ENCODE measurements at regions of chr2 and their contacts with region 1.

Region 1: DNA sequence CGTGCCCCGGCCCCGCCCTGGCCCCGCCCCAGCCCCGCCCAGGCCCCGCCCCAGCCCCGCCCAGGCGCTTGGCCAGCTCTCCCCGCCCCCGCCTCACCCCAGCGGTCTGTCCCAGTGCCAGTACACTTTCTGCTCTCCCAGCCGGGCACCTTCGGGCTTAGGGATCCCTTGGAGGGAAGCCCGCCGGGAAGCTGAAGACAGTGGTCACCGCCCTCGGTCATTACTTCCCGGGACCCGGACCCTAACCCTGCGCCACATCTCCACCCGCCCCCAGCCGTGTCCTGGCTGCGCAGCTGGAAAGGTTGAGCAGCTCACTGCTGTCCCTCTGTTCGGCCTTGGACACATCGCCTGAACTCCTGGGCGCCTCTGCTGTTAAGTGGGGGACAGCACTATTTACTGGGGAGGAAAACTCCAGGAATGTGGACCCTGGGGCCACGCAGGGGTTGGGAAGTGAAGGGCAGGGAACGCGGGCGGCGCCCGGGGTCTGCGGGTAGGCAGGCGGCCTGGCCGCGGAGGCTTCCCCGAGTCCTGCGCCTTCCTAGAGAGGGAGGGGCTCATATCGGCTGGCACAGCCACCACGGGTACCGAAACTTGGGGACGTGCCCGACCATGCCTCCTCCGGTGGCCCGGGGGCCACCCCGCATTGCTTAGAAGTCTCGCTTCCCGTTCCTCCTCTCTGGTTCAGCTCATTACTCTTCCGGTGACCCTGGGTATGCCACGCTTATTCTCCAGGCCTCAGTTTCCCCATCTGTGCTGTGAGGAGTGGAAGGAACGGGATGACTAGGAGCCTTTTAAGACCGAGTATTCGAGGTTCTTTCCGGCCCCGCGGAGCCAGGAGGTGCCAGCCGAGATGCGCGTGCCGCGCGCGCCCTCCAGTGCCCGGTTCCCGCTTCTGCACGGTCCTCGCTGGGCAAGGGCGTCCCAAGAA is 121.0 kb downstream of the GYPC start:
- DNase-seq: peak; percentile 21
- H3K4me3 ChIP-seq: peak overlapping the region; percentile 62
- H3K27ac ChIP-seq: no peak overlapping the region
- H3K27me3 ChIP-seq: peaks cover 6% of the 10 kb centered on the region
- CTCF ChIP-seq: peak; percentile 99

Region 2: GRCh38 chr2:126527836-126528507 is 249.0 kb before region 1 on chr2:
- CTCF ChIA-PET with region 1: interaction called, 118 read pairs
- POLR2A ChIA-PET with region 1: interaction called, 5 read pairs
- DNase-seq: peak; percentile 13
- H3K4me3 ChIP-seq: no peak overlapping the region
- H3K27ac ChIP-seq: no peak overlapping the region
- H3K27me3 ChIP-seq: no peaks in the 10 kb centered on the region
- CTCF ChIP-seq: peak; percentile 65

Region 3: DNA sequence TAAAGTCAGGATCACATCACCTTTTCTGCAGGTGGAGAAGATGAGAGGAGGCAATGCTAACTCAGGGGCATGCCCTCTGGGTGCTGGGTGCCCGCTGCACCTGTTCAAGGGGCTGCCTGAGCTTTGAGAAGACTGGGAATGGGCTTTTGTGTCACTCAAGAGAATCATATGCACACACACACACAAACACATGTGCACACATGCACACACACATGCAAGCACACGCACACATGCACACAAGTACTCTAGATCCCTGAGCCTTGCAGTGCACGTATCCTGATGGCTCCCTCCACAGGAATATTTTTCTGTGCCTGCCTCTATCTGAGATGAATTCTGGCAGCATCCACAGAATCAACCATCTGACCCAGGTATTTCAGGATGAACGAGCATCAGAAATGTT is 11.7 kb after region 1 on chr2:
- CTCF ChIA-PET with region 1: no interaction called
- POLR2A ChIA-PET with region 1: no interaction called
- DNase-seq: no peak
- H3K4me3 ChIP-seq: no peak overlapping the region
- H3K27ac ChIP-seq: no peak overlapping the region
- H3K27me3 ChIP-seq: no peaks in the 10 kb centered on the region
- CTCF ChIP-seq: no peak

Region 4: DNA sequence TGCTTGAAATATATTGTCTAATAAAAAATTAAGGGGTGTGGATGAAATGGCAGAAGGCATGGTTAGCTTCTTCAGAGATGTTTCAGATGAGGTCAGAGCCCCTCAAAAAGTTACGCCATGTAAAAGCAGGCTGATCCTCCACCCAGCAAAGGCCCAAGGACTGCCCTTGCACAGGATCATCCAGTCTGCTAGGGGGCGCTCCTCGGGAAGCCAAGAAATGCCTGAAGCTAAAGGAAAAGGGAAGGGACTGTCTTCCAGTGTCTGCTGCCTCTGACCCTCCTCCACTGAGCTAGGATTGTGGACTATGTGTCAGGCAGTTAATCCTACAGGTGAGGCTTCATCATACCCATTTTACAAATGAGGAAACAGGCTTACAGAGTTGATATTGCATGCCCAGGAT is 87.9 kb after region 1 on chr2:
- CTCF ChIA-PET with region 1: no interaction called
- POLR2A ChIA-PET with region 1: no interaction called
- DNase-seq: no peak
- H3K4me3 ChIP-seq: no peak overlapping the region
- H3K27ac ChIP-seq: no peak overlapping the region
- H3K27me3 ChIP-seq: no peaks in the 10 kb centered on the region
- CTCF ChIP-seq: peak; percentile 34

Measured in AG04450 (cell line).